ENCODE measurements at regions of chr7 and their contacts with region 1.

Region 1: DNA sequence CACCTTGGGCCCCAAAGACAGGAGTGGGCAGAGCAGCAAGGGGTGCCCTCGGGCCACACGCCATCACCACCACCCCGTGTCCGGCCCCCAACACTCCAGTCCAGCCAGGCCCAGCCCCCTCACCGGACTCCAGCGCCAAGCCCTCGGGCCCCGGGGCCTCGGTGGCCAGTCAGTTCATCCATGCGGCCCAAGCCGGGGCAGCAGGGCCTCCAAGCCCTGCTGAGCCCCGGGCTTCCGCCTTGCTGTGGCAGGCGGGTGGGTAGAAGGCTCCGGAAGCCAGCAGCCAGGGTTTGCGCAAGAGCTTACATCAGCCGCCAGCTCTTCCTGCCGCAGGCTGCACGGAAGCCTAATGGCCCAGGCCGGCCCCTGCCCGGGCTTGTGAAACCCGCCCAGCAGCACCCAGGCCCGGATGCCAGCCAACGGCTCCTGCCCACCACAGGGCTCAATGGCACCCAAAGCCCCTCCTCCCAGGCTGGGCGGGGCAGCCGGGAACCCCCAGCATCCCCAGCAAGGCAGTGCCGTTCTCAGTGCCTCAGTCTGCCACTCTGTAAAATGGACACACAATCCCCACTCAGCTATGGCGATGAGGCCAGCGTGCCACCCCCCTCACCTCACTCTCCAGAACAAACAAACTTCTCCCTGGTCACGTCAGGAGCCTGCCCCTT is 26.5 kb downstream of the TNRC18 start:
- DNase-seq: peak; percentile 96
- H3K4me3 ChIP-seq: peak overlapping the region; percentile 62 to 84 (median 82)
- H3K27ac ChIP-seq: peak overlapping the region; percentile 78
- H3K4me1 ChIP-seq: peaks cover 9% of the 10 kb centered on the region
- H3K27me3 ChIP-seq: no peaks in the 10 kb centered on the region
- CTCF ChIP-seq: no peak

Region 2: DNA sequence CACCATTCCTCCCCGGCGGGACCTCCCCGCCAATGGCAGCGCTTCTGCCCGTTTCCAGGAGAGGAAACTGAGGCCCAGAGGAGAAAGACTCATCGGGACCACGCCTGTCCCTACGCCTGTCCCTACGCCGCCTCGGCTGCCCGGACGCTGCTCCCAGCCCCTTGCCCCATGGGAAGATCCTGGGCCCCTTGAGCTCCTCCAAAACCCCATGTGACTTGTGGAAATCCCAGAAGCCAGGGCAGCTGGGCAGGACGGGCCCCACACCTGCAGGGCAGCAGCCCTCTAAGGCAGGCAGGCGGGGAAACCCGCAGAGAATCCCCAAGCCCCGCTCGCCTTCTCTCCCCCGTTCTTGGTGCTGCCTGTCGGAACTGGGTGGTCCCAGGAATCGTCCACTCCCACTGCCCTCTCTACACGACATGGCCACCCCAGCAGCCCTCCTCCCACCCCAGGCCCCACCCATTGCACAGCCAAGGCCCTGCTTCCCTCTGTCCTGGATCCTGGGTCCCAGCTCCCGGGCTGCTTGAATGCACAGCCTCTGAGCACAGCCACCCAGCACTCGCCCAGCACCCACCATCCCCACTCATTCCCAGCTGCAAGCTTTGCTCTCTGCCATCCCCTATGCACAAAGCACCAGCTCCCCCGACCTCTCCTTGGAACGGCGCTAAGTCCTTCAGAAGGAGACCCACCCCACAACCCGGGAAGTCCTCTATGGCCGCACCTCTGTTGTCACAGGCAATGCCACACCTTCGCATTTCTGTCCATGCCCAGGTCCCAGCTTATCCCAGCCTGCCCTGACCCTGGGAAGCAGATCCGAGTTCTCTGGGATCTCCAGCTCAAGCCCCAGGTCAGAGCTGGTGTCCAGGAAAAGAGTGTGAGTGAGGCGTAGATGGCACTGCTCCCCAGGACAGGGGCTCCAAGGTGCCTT is 63.7 kb before region 1 on chr7:
- CTCF ChIA-PET with region 1: no interaction called
- dilution Hi-C with region 1: no loop called
- in situ Hi-C with region 1: no loop called
- intact Hi-C with region 1: no loop called
- DNase-seq: no peak
- H3K4me3 ChIP-seq: no peak overlapping the region
- H3K27ac ChIP-seq: no peak overlapping the region
- H3K4me1 ChIP-seq: peaks cover 2% of the 10 kb centered on the region
- H3K27me3 ChIP-seq: no peaks in the 10 kb centered on the region
- CTCF ChIP-seq: no peak

Region 3: DNA sequence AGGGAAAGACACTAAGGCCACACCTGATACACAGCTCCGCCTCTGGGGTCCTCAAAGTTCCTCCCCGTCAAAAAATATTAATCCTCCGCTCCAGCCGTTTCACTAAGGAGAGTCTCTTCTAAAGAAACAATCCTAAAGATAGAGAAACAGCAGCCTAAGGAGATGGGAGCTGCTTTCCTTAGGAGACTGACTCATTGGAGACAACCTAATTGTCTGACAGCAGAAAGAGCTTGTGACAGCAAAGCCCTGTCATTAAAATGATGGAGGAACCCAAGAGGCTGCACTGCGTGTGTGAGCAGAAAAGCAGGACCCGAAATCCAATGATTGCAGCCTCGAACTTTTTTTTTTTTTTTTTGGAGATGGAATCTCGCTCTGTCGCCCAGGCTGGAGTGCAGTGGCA is 70.5 kb after region 1 on chr7:
- CTCF ChIA-PET with region 1: interaction called, 11 read pairs
- dilution Hi-C with region 1: no loop called
- in situ Hi-C with region 1: no loop called
- intact Hi-C with region 1: no loop called
- DNase-seq: no peak
- H3K4me3 ChIP-seq: no peak overlapping the region
- H3K27ac ChIP-seq: no peak overlapping the region
- H3K4me1 ChIP-seq: peaks cover 5% of the 10 kb centered on the region
- H3K27me3 ChIP-seq: no peaks in the 10 kb centered on the region
- CTCF ChIP-seq: no peak

Region 4: DNA sequence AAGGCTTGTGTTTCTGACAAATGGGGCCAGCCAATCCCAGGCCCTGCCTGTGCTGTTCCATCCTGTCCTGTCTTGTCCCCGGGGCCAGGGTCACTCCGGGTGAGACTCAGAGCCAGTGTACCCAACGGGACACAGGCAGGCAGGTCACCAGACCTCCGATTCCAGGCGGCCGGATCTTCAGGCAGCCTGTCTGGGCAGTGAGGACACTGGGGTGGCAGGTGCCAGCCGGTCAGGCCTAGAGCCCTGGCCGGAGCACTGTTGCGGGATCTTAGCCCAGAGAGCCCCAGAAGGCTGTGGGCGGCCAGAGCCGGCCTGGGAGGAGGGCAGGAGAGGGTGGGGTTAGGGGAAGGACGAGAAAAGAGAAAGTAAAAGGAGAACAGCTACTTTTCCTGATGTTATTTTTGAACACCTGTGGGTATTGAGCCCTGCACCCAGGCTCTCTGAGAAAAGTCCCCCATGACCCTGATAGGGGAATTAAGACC is 160.8 kb after region 1 on chr7:
- CTCF ChIA-PET with region 1: no interaction called
- dilution Hi-C with region 1: no loop called
- in situ Hi-C with region 1: no loop called
- intact Hi-C with region 1: loop called (anchors 1 kb)
- DNase-seq: peak; percentile 41
- H3K4me3 ChIP-seq: no peak overlapping the region
- H3K27ac ChIP-seq: peak overlapping the region; percentile 19
- H3K4me1 ChIP-seq: peaks cover 51% of the 10 kb centered on the region
- H3K27me3 ChIP-seq: no peaks in the 10 kb centered on the region
- CTCF ChIP-seq: no peak

Measured in mammary epithelial cell (primary cell).